ENCODE measurements at regions of chr17 and their contacts with region 1.

Region 1: GRCh38 chr17:56913864-56914640 is at the start of gene TRIM25:
- DNase-seq: peak; percentile 95 to 98
- ATAC-seq: peak; percentile 95
- H3K4me3 ChIP-seq: peak within 1 kb of the TSS; percentile 63 to 80
- H3K27ac ChIP-seq: peak within 1 kb of the TSS in 1 of 2 donors; percentile 46
- H3K4me1 ChIP-seq: no peaks in the 10 kb centered on the region
- H3K27me3 ChIP-seq: no peaks in the 10 kb centered on the region
- total RNA-seq, gene TRIM25: 38.0 to 85.3 TPM

Region 2: DNA sequence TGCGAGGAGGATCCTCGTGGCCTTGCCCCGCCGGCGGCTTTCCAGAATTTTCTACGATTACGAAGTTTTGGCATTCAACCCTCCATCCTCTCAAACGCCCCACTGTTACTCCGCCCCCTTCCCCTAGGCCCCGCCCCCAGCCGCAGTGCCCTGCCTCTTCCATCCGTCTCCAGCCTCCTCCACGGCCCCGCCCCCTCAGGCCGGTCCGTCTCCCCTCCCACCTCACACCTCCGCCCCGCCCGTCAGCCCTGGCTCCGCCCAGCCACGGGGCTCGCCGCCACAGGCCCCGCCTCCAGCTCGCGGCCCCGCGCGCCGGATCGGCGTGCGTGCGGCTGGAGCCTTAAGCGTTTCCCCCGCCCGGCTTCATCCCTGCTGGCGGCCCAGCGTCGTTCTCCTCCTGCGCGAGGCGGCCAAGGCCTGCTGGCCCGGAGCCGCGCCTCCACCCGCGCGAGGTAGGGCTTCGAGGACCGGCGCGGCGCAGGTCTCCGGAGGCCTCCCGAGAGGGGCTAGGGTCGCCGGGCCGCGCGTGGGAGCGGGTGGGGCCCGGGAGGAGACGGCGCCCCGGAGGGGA is 80.2 kb before region 1 on chr17 and contains the starts of genes C17orf67 and DGKE:
- intact Hi-C with region 1: loop called (anchors 5 kb)
- DNase-seq: peak; percentile 99 to 100
- ATAC-seq: peak; percentile 98
- H3K4me3 ChIP-seq: peak within 1 kb of the TSS; percentile 65 to 73
- H3K27ac ChIP-seq: peak within 1 kb of the TSS in 1 of 2 donors; percentile 1
- H3K4me1 ChIP-seq: no peaks in the 10 kb centered on the region
- H3K27me3 ChIP-seq: no peaks in the 10 kb centered on the region
- total RNA-seq, gene C17orf67: 3.3 to 5.0 TPM
- total RNA-seq, gene DGKE: 9.9 to 17.1 TPM

Region 3: DNA sequence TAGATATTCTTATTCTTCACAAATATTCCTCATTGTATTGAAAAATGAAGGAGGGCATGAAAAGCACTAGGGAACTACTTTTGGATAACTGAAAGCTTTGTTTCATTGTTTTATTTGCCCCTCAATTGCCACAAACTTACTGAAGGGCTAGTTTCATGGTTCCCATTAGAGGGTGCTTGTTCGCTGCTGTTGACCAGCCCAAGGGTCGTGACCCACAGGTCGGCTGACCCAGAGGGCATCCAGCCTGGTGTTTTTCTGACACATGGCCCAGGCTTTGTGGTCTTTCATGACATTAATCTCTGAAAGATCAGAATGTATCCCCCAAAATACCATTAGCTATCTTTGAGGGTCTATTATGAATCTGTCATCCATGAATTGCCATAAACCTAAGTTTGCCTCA is 50.1 kb before region 1 on chr17:
- intact Hi-C with region 1: no loop called
- DNase-seq: no peak
- ATAC-seq: no peak
- H3K4me3 ChIP-seq: no peak overlapping the region
- H3K27ac ChIP-seq: no peak overlapping the region
- H3K4me1 ChIP-seq: no peaks in the 10 kb centered on the region
- H3K27me3 ChIP-seq: no peaks in the 10 kb centered on the region

Region 4: DNA sequence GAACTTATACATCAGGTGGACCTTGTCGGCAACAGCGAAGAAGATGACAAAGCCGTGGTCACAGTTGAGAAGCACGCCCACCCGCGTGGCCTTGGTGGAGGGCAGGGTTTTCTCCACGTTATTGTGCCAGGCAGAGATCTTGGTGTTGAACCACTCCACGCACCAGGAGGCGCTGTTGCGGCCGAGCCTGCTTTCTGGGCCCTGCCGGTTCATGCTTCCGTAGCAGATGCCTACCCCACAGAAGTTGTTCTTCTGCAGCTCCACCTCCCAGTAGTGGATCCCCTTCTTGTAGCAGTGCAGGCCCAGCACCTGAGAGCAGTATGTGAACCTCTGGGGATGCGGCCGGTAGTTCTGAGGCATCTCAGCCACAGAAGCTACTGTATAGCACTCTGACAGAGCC is 22.3 kb before region 1 on chr17:
- intact Hi-C with region 1: no loop called
- DNase-seq: peak; percentile 55 to 86
- ATAC-seq: no peak
- H3K4me3 ChIP-seq: no peak overlapping the region
- H3K27ac ChIP-seq: no peak overlapping the region
- H3K4me1 ChIP-seq: no peaks in the 10 kb centered on the region
- H3K27me3 ChIP-seq: no peaks in the 10 kb centered on the region

Region 5: DNA sequence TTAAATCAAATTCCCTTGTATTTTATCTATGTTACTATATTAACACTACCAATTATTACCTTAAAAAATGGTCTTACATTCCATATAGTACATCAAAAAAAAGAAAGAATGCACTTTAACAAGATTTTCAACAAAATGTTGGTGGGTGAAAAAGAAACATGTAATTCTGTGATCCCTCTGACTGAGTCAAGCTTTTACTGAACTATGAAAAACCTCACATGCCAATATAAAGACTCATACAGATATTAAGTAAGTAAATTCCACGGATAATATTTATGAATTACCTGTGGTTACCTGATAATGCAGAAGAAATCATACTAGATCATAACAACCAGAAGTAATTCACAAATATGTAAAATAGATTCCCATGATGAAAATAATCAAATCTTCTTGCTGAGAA is 34.4 kb after region 1 on chr17:
- intact Hi-C with region 1: no loop called
- DNase-seq: no peak
- ATAC-seq: no peak
- H3K4me3 ChIP-seq: no peak overlapping the region
- H3K27ac ChIP-seq: no peak overlapping the region
- H3K4me1 ChIP-seq: no peaks in the 10 kb centered on the region
- H3K27me3 ChIP-seq: no peaks in the 10 kb centered on the region

Region 6: GRCh38 chr17:56960596-56961538 is 46.8 kb after region 1 on chr17 and contains the start of gene COIL:
- intact Hi-C with region 1: loop called in 1 of 2 experiments (anchors 5 kb)
- DNase-seq: peak; percentile 95 to 97
- ATAC-seq: peak; percentile 99
- H3K4me3 ChIP-seq: peak within 1 kb of the TSS; percentile 99 to 100
- H3K27ac ChIP-seq: peak within 1 kb of the TSS in 1 of 2 donors; percentile 74
- H3K4me1 ChIP-seq: no peaks in the 10 kb centered on the region
- H3K27me3 ChIP-seq: no peaks in the 10 kb centered on the region
- total RNA-seq, gene COIL: 10.8 to 12.0 TPM